MCF 10A (cell line): ENCODE measurements at regions of chr2 and their contacts with region 1.

Region 1: GRCh38 chr2:158006961-158007719 is 94.5 kb upstream of the UPP2 start:
- DNase-seq: no peak
- H3K4me3 Mint-ChIP-seq: no peak overlapping the region
- H3K27ac Mint-ChIP-seq: no peak overlapping the region
- H3K4me1 Mint-ChIP-seq: peaks cover 6% of the 10 kb centered on the region
- H3K27me3 Mint-ChIP-seq: no peaks in the 10 kb centered on the region
- CTCF ChIP-seq: no peak

Region 2: GRCh38 chr2:157327621-157328500 is 679.3 kb before region 1 on chr2:
- CTCF ChIA-PET with region 1: interaction called, 16 read pairs
- POLR2A ChIA-PET with region 1: no interaction called
- intact Hi-C with region 1: no loop called
- DNase-seq: peak; percentile 74
- H3K4me3 Mint-ChIP-seq: no peak overlapping the region
- H3K27ac Mint-ChIP-seq: no peak overlapping the region
- H3K4me1 Mint-ChIP-seq: peaks cover 8% of the 10 kb centered on the region
- H3K27me3 Mint-ChIP-seq: no peaks in the 10 kb centered on the region
- CTCF ChIP-seq: peak; percentile 88

Region 3: DNA sequence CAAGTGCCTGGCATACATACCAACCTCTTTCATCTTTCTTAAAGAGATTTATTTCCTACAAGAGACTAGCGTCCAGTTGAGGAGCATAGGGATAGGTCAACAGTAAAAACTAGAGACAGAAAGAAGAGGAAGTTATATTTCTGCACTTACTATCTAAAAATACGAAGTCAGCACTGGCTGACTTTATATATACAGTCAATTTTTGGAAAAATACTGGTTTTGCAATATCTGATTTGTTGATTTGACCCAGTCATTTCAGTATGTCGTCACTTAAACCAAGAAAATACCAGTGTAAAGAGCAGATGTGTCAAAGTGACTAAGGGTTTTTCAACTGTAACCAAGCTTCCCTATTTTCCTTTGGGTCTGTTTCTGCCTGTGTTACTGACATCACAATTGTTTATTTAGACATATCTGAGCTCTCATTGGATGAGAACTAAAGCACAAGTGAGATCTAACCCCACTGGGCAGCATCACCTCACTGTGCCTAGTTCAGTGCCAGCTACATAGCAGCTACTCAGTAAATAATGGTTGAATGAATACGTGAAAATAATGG is 586.3 kb before region 1 on chr2:
- CTCF ChIA-PET with region 1: no interaction called
- POLR2A ChIA-PET with region 1: no interaction called
- intact Hi-C with region 1: no loop called
- DNase-seq: peak; percentile 30
- H3K4me3 Mint-ChIP-seq: no peak overlapping the region
- H3K27ac Mint-ChIP-seq: no peak overlapping the region
- H3K4me1 Mint-ChIP-seq: no peaks in the 10 kb centered on the region
- H3K27me3 Mint-ChIP-seq: no peaks in the 10 kb centered on the region
- CTCF ChIP-seq: no peak

Region 4: GRCh38 chr2:157628477-157629415 is 378.4 kb before region 1 on chr2 and contains the start of gene ACVR1C:
- CTCF ChIA-PET with region 1: interaction called, 3 read pairs
- POLR2A ChIA-PET with region 1: no interaction called
- intact Hi-C with region 1: loop called (anchors 10 kb)
- DNase-seq: peak; percentile 67
- H3K4me3 Mint-ChIP-seq: peak within 1 kb of the TSS; percentile 72
- H3K27ac Mint-ChIP-seq: no peak within 1 kb of the TSS
- H3K4me1 Mint-ChIP-seq: no peaks in the 10 kb centered on the region
- H3K27me3 Mint-ChIP-seq: peaks cover 11% of the 10 kb centered on the region
- CTCF ChIP-seq: peak; percentile 61
- total RNA-seq, gene ACVR1C: 0.12 and 0.17 TPM in 2 replicates

Region 5: GRCh38 chr2:157784169-157784822 is 222.8 kb before region 1 on chr2:
- CTCF ChIA-PET with region 1: interaction called, 44 read pairs
- POLR2A ChIA-PET with region 1: interaction called, 6 read pairs
- intact Hi-C with region 1: loop called (anchors 2 kb)
- DNase-seq: peak; percentile 88
- H3K4me3 Mint-ChIP-seq: peak overlapping the region; percentile 66
- H3K27ac Mint-ChIP-seq: peak overlapping the region; percentile 79
- H3K4me1 Mint-ChIP-seq: peaks cover 41% of the 10 kb centered on the region
- H3K27me3 Mint-ChIP-seq: no peaks in the 10 kb centered on the region
- CTCF ChIP-seq: no peak

Region 6: GRCh38 chr2:157925071-157925470 is 82.1 kb before region 1 on chr2:
- CTCF ChIA-PET with region 1: no interaction called
- POLR2A ChIA-PET with region 1: no interaction called
- intact Hi-C with region 1: no loop called
- DNase-seq: no peak
- H3K4me3 Mint-ChIP-seq: no peak overlapping the region
- H3K27ac Mint-ChIP-seq: no peak overlapping the region
- H3K4me1 Mint-ChIP-seq: no peaks in the 10 kb centered on the region
- H3K27me3 Mint-ChIP-seq: no peaks in the 10 kb centered on the region
- CTCF ChIP-seq: no peak

Region 7: GRCh38 chr2:157996799-157997198 is 10.3 kb before region 1 on chr2:
- CTCF ChIA-PET with region 1: interaction called, 10 read pairs
- POLR2A ChIA-PET with region 1: interaction called, 3 read pairs
- intact Hi-C with region 1: no loop called
- DNase-seq: no peak
- H3K4me3 Mint-ChIP-seq: no peak overlapping the region
- H3K27ac Mint-ChIP-seq: no peak overlapping the region
- H3K4me1 Mint-ChIP-seq: peaks cover 9% of the 10 kb centered on the region
- H3K27me3 Mint-ChIP-seq: no peaks in the 10 kb centered on the region
- CTCF ChIP-seq: no peak